Thyroid gland (tissue), 4 donors: ENCODE measurements at regions of chr1 and their contacts with region 1.

Region 1: GRCh38 chr1:25695090-25695770 is 78.6 kb downstream of the MAN1C1 start:
- DNase-seq: peak; percentile 89 to 91
- H3K4me3 ChIP-seq: no peak overlapping the region
- H3K27ac ChIP-seq: peak overlapping the region; percentile 93 to 96 (median 94)
- H3K4me1 ChIP-seq: peaks cover 37 to 60% of the 10 kb centered on the region in 2 donors
- H3K27me3 ChIP-seq: no peaks in the 10 kb centered on the region
- CTCF ChIP-seq: peak in 4 of 6 experiments; percentile 18 to 49 (median 35)
- POLR2A ChIP-seq: peak in 1 of 2 donors; percentile 63

Region 2: GRCh38 chr1:25590096-25590824 is 105.0 kb before region 1 on chr1:
- intact Hi-C with region 1: no loop called
- DNase-seq: no peak
- H3K4me3 ChIP-seq: no peak overlapping the region
- H3K27ac ChIP-seq: peak overlapping the region in 1 of 3 donors; percentile 51
- H3K4me1 ChIP-seq: peaks cover 0 to 6% of the 10 kb centered on the region in 2 donors
- H3K27me3 ChIP-seq: no peaks in the 10 kb centered on the region
- CTCF ChIP-seq: peak in 1 of 6 experiments; percentile 9
- POLR2A ChIP-seq: no peak

Region 3: DNA sequence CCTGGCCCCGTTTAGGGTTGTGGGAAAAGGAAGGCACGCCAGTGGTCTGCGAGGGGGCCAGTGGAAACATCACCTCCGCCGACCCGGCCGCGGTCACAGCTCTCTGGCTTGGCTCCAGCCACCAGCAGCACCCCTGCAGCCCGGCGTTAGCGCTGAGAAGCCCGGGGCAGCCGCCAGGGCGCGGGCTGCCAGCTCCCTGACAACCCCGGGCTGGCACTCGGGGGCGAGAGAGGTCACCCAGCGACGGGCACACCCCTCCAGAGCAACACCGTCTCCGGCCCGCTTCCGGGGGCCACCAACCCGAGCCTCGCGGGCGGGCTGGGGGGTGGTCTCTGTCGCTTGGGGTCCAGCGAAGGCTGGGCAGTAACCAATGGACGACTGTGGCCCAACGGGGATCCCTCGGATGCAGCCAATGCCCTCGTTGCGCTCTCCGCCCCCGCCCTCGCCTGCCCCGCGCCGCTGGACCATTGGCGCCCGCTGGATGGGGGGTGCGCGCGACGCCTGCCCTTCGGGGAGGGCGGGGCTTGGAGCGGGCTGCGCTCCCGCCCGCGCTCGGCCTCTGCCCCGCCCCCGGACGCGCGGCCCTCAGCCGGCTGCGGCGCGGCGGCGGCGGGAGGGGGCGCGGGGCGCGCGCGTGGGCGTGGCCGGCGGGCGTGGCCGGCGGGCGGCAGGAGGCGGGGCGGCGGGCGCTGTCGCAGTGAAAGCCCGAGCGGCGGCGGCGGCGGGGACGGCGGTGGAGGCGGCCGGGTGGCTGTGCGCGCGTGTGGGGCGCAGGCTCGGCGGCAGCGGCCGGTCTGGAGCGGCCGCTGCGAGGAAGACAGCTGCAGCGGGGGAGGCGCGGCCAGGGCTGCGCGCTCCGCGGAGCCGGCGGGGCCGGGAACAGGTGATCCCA is 78.9 kb before region 1 on chr1 and contains the start of gene MAN1C1:
- intact Hi-C with region 1: loop called (anchors 10 kb)
- DNase-seq: peak; percentile 91 to 93
- H3K4me3 ChIP-seq: peak within 1 kb of the TSS; percentile 49 to 89 (median 88)
- H3K27ac ChIP-seq: peak within 1 kb of the TSS; percentile 74 to 92 (median 88)
- H3K4me1 ChIP-seq: peaks cover 34 to 38% of the 10 kb centered on the region in 2 donors
- H3K27me3 ChIP-seq: no peaks in the 10 kb centered on the region
- CTCF ChIP-seq: peak; percentile 24 to 62 (median 51)
- POLR2A ChIP-seq: peak in 1 of 2 donors; percentile 88
- total RNA-seq, gene MAN1C1: 28.1 to 60.4 (median 32.7) TPM

Region 4: DNA sequence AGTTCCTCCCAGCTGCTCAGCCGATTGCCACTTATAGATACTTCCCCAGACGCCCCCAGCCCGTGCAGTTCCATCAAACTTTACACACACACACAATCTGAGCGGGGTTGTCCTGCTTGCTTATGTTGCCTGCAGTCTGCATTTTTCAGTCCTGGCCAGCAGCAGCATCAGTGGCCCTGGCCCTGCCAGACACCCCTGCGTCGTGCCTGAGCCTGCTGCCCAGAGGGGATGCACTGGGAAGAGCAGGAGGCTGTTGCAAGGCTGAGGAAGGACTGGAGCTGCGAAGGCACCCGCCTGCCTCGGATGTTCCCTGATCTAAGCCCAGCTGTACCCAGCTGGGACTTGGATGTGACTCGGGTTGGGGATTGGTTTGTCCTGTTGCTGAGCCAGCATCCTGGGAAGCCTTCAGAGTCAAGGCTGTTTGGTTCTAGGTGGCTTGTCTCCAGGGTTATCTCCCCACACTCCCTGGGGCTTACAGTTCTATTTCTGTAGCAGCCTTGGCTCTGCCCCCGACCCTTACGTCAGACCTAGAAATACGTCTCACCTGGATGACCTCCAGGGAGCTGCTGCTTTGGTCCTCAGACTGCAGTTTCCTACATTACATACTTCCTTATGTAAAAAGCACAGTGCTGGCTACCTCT is 36.3 kb before region 1 on chr1:
- intact Hi-C with region 1: no loop called
- DNase-seq: peak; percentile 81 to 85
- H3K4me3 ChIP-seq: no peak overlapping the region
- H3K27ac ChIP-seq: peak overlapping the region; percentile 21 to 69 (median 63)
- H3K4me1 ChIP-seq: peaks cover 4 to 33% of the 10 kb centered on the region in 2 donors
- H3K27me3 ChIP-seq: no peaks in the 10 kb centered on the region
- CTCF ChIP-seq: no peak
- POLR2A ChIP-seq: no peak

Region 5: GRCh38 chr1:25668948-25669573 is 26.2 kb before region 1 on chr1:
- intact Hi-C with region 1: no loop called
- DNase-seq: no peak
- H3K4me3 ChIP-seq: no peak overlapping the region
- H3K27ac ChIP-seq: peak overlapping the region in 2 of 3 donors; percentile 63 to 71
- H3K4me1 ChIP-seq: peaks cover 15 to 24% of the 10 kb centered on the region in 2 donors
- H3K27me3 ChIP-seq: no peaks in the 10 kb centered on the region
- CTCF ChIP-seq: no peak
- POLR2A ChIP-seq: no peak